PC-3 (cell line): ENCODE measurements at regions of chr7 and their contacts with region 1.

Region 1: DNA sequence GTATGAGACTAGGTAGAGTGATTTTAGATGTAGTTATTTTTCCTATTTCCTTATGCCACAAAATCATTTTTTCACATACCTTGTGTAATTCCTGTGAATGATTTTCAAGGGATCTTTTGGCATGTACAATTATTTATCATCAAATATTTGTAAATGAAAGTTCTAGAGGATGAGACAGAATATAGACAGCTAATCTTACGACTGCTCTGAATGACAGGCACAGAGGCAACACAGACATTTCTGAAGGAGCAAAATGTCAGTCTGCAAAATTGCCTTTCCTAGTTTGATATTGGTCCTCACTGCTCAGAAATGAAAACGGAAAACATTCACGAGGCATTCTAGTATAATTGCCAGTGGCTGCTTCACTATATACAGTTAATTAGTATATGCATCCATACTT is 810.6 kb upstream of the C7orf33 start:
- DNase-seq: no peak
- ATAC-seq: no peak
- H3K4me3 ChIP-seq: no peak overlapping the region
- H3K27ac ChIP-seq: no peak overlapping the region
- H3K4me1 ChIP-seq: no peaks in the 10 kb centered on the region
- H3K27me3 ChIP-seq: no peaks in the 10 kb centered on the region
- CTCF ChIP-seq: no peak

Region 2: DNA sequence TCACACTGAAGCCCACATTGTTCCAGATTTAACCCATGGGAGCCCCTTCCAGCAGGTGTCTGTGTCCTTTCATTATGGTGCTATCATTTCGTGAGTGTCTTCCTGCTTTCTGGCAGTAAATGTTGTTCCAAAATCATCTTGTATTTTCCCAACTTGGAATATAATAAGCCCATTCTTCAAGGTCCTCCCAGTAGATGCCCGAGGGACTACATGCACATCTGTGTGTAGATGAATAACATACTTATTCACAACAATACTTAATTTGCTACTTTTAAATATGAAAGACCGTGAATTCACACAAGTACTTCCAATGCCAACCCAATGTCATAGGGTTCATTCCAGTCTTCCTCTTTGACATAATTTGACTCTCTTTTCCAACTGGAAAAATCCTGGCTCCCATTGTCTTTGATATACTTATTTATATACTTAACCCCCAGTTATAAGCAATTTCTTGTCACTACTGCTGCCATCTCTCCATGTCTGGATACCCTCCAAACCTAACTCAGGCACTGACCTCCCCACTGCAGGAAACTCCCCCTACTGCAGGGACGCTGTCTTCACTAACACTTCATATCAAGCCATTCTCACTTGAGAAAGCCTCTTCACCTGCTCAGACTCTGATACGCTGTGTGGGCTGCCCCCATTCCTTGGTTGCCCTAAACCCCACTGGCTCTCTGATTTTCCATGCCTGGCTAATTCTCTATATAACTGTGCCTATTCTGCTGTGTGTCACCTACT is 544.1 kb before region 1 on chr7:
- CTCF ChIA-PET with region 1: no interaction called
- POLR2A ChIA-PET with region 1: no interaction called
- intact Hi-C with region 1: loop called (anchors 5 kb)
- DNase-seq: no peak
- ATAC-seq: no peak
- H3K4me3 ChIP-seq: no peak overlapping the region
- H3K27ac ChIP-seq: no peak overlapping the region
- H3K4me1 ChIP-seq: no peaks in the 10 kb centered on the region
- H3K27me3 ChIP-seq: no peaks in the 10 kb centered on the region
- CTCF ChIP-seq: no peak

Region 3: DNA sequence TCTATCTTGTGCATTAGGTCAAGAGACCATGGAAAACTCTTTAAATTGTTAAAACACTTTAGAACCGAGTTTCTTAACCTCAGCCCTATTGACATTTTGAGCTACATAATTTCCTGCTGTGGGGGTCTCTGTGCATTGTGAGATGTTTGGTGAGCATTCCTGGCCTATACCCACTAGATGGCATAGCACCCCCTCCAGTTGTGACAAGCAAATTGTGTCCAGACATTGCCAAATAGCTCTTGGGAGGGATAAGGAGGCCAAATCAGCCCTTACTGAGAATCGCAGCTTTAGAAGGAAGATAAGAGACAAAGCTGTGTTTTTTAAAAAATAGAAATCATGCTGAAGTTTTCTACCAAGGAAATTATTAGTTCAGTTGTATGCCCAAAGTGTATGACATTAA is 347.9 kb before region 1 on chr7:
- CTCF ChIA-PET with region 1: no interaction called
- POLR2A ChIA-PET with region 1: no interaction called
- intact Hi-C with region 1: loop called (anchors 10 kb)
- DNase-seq: peak; percentile 56
- ATAC-seq: peak; percentile 26; the same call in 1 of the 2 replicates
- H3K4me3 ChIP-seq: no peak overlapping the region
- H3K27ac ChIP-seq: no peak overlapping the region
- H3K4me1 ChIP-seq: peaks cover 17% of the 10 kb centered on the region
- H3K27me3 ChIP-seq: no peaks in the 10 kb centered on the region
- CTCF ChIP-seq: peak; percentile 74

Region 4: GRCh38 chr7:147547249-147547897 is 232.6 kb before region 1 on chr7:
- CTCF ChIA-PET with region 1: no interaction called
- POLR2A ChIA-PET with region 1: no interaction called
- intact Hi-C with region 1: loop called (anchors 10 kb)
- DNase-seq: peak; percentile 66
- ATAC-seq: peak; percentile 81
- H3K4me3 ChIP-seq: no peak overlapping the region
- H3K27ac ChIP-seq: no peak overlapping the region
- H3K4me1 ChIP-seq: no peaks in the 10 kb centered on the region
- H3K27me3 ChIP-seq: no peaks in the 10 kb centered on the region
- CTCF ChIP-seq: peak; percentile 78

Region 5: DNA sequence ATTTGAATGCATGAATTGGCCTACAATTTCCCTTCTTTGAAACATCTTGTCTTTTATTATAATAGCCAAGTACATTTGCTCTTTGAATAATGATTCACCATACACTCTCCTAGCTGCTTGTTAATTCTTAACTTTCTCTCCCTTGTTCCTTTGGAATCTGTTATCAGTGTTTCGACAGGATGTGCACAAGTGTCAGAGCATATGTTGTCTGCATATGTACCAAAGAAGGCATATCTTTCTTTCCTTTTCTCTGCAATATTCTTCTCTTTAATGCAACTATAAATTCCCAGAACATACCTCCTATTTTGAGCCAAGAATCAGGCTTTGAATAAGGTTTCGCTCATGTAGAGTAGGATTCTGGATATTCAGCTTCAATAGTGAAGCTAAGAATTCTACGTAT is 37.6 kb before region 1 on chr7:
- CTCF ChIA-PET with region 1: no interaction called
- POLR2A ChIA-PET with region 1: no interaction called
- intact Hi-C with region 1: no loop called
- DNase-seq: no peak
- ATAC-seq: no peak
- H3K4me3 ChIP-seq: no peak overlapping the region
- H3K27ac ChIP-seq: no peak overlapping the region
- H3K4me1 ChIP-seq: no peaks in the 10 kb centered on the region
- H3K27me3 ChIP-seq: no peaks in the 10 kb centered on the region
- CTCF ChIP-seq: no peak